HepG2 (cell line): ENCODE measurements at regions of chrX and their contacts with region 1.

Region 1: GRCh38 chrX:41781502-41781901 is 57.5 kb downstream of the GPR82 start:
- DNase-seq: peak; percentile 36
- ATAC-seq: peak; percentile 62
- H3K4me3 ChIP-seq: no peak overlapping the region
- H3K27ac ChIP-seq: no peak overlapping the region
- H3K4me1 ChIP-seq: no peaks in the 10 kb centered on the region
- H3K27me3 ChIP-seq: no peaks in the 10 kb centered on the region
- CTCF ChIP-seq: peak; percentile 67
- EP300 ChIP-seq: no peak
- POLR2A ChIP-seq: no peak
- RAD21 ChIP-seq: no peak

Region 2: DNA sequence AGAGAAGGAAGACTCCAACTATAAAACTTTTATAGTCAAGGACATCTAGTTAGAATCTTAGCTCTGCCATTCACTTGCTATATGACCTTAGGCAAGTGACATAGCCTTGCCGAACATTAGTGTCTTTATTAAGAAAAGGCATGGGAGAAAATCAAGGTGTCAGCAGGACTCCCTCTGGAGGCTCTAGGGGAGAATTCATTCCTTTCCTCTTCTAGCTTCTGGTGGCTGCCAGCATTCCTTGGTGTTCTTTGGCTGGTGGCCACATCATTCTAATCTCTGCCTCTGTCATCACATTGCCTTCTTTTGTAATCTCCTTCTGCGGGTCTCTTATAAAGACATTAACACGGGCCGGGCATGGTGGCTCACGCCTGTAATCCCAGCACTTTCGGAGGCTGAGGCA is 896.6 kb after region 1 on chrX:
- CTCF ChIA-PET with region 1: no interaction called
- POLR2A ChIA-PET with region 1: no interaction called
- in situ Hi-C with region 1: loop called (anchors 25 kb)
- intact Hi-C with region 1: no loop called
- DNase-seq: no peak
- ATAC-seq: no peak
- H3K4me3 ChIP-seq: no peak overlapping the region
- H3K27ac ChIP-seq: no peak overlapping the region
- H3K4me1 ChIP-seq: no peaks in the 10 kb centered on the region
- H3K27me3 ChIP-seq: no peaks in the 10 kb centered on the region
- CTCF ChIP-seq: no peak
- EP300 ChIP-seq: no peak
- POLR2A ChIP-seq: no peak
- RAD21 ChIP-seq: no peak